Calu3 (cell line): ENCODE measurements at regions of chr12 and their contacts with region 1.

Region 1: DNA sequence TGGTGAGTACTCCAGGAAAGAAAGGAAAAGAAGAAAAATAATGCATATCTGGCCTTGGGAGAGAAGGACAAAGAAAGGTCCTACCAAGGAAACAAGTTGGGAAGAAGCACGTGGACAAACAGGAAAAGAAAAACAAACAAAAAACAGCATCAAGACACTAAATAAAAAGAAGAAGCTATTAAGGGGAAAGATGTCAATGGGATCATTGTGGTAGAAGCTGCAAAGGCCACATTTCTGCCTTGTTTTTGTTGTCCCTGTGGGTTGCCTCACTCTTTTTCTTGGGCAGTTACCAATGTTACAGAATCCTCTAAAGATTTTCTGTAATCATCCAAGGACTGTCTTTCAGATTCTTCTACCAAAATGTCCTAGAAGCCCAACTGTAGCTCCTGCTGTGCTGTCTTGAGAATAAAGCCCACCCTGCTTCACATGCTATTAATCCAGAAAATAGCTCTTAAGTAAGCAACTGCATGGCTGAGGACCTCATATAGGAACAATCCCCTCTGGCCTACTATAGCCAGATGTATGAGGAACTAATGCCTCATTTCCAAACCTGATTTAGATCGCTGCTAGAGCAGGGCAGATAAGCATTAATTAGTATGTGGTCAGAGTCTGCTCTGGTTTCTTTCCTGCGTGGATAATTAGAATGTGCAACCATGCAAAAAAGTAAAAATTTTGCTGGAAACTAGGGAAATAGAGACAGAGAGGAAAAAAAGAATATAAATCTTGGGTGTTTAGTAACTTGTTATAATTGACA is 10.2 kb upstream of the CPNE8 start:
- DNase-seq: no peak
- H3K4me3 Mint-ChIP-seq: no peak overlapping the region
- H3K27ac Mint-ChIP-seq: no peak overlapping the region
- H3K4me1 Mint-ChIP-seq: no peaks in the 10 kb centered on the region
- H3K27me3 Mint-ChIP-seq: no peaks in the 10 kb centered on the region
- CTCF ChIP-seq: no peak

Region 2: GRCh38 chr12:38332814-38333213 is 582.8 kb before region 1 on chr12:
- CTCF ChIA-PET with region 1: no interaction called
- intact Hi-C with region 1: loop called (anchors 2 kb)
- DNase-seq: no peak
- H3K4me3 Mint-ChIP-seq: no peak overlapping the region
- H3K27ac Mint-ChIP-seq: no peak overlapping the region
- H3K4me1 Mint-ChIP-seq: no peaks in the 10 kb centered on the region
- H3K27me3 Mint-ChIP-seq: no peaks in the 10 kb centered on the region
- CTCF ChIP-seq: no peak

Region 3: DNA sequence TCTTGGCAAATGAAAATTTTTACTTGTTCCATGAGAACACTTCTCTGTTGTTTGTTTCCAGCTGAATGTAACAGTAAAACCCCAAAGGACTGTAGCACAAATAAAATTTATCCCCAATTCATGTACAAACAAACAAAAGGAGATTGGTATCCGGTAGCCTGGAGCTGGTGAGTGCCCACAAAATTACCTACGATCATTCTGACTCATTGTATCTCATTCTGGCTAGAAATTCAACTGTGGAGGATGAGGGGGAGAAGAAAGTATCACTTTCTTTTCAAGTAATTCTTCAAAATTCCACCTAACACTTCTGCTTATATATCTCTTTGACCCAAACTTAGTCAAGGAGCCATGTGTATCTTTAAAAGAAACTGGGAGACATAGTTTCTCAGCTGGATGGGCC is 330.5 kb before region 1 on chr12:
- CTCF ChIA-PET with region 1: no interaction called
- intact Hi-C with region 1: no loop called
- DNase-seq: no peak
- H3K4me3 Mint-ChIP-seq: no peak overlapping the region
- H3K27ac Mint-ChIP-seq: no peak overlapping the region
- H3K4me1 Mint-ChIP-seq: no peaks in the 10 kb centered on the region
- H3K27me3 Mint-ChIP-seq: no peaks in the 10 kb centered on the region
- CTCF ChIP-seq: no peak

Region 4: DNA sequence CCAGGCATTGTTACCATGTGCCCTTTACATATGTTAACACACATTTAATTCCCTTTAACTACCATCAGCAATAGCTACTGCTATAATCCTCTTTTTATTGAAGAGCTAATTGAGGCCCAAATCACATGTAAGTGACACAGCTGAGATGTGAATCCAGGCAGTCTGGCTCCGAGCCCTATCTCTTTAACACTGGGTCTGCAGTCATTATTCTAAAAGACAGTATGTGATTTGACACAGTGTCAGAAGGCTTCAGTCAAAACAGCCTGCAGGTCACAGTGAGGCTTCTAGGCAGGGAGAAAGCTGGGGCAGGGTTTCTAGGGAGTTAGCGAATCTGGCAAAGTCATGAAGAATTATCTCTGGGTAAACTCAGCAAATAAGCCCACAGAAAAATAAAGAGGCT is 379.1 kb after region 1 on chr12:
- CTCF ChIA-PET with region 1: no interaction called
- intact Hi-C with region 1: no loop called
- DNase-seq: no peak
- H3K4me3 Mint-ChIP-seq: no peak overlapping the region
- H3K27ac Mint-ChIP-seq: no peak overlapping the region
- H3K4me1 Mint-ChIP-seq: no peaks in the 10 kb centered on the region
- H3K27me3 Mint-ChIP-seq: no peaks in the 10 kb centered on the region
- CTCF ChIP-seq: no peak